ENCODE measurements at regions of chrX and their contacts with region 1.

Region 1: GRCh38 chrX:49754233-49754857 is 58.6 kb upstream of the PAGE1 start:
- DNase-seq: peak; percentile 15 to 69 (median 36)
- ATAC-seq: peak; percentile 88
- H3K4me3 ChIP-seq: no peak overlapping the region
- H3K4me3 Mint-ChIP-seq: no peak overlapping the region
- H3K27ac ChIP-seq: no peak overlapping the region
- H3K27ac Mint-ChIP-seq: no peak overlapping the region
- H3K4me1 ChIP-seq: no peaks in the 10 kb centered on the region
- H3K4me1 Mint-ChIP-seq: peaks cover 4% of the 10 kb centered on the region
- H3K27me3 ChIP-seq: peaks cover 0 to 3% of the 10 kb centered on the region in 2 experiments
- H3K27me3 Mint-ChIP-seq: peaks cover 19% of the 10 kb centered on the region
- CTCF ChIP-seq: peak; percentile 57

Region 2: GRCh38 chrX:48996969-48997368 is 757.4 kb before region 1 on chrX:
- CTCF ChIA-PET with region 1: no interaction called
- POLR2A ChIA-PET with region 1: no interaction called
- intact Hi-C with region 1: loop called in 1 of 2 experiments (anchors 10 kb)
- DNase-seq: peak in 3 of 14 experiments; percentile 10 to 28 (median 24)
- ATAC-seq: no peak
- H3K4me3 ChIP-seq: no peak overlapping the region
- H3K4me3 Mint-ChIP-seq: no peak overlapping the region
- H3K27ac ChIP-seq: no peak overlapping the region
- H3K27ac Mint-ChIP-seq: no peak overlapping the region
- H3K4me1 ChIP-seq: peaks cover 24% of the 10 kb centered on the region
- H3K4me1 Mint-ChIP-seq: peaks cover 20% of the 10 kb centered on the region
- H3K27me3 ChIP-seq: no peaks in the 10 kb centered on the region
- H3K27me3 Mint-ChIP-seq: no peaks in the 10 kb centered on the region
- CTCF ChIP-seq: no peak

Region 3: GRCh38 chrX:49291615-49292337 is 462.6 kb before region 1 on chrX:
- CTCF ChIA-PET with region 1: no interaction called
- POLR2A ChIA-PET with region 1: no interaction called
- intact Hi-C with region 1: loop called in 1 of 2 experiments (anchors 5 kb)
- DNase-seq: peak; percentile 48 to 81 (median 61)
- ATAC-seq: peak; percentile 98
- H3K4me3 ChIP-seq: no peak overlapping the region
- H3K4me3 Mint-ChIP-seq: no peak overlapping the region
- H3K27ac ChIP-seq: no peak overlapping the region
- H3K27ac Mint-ChIP-seq: peak overlapping the region; percentile 38
- H3K4me1 ChIP-seq: peaks cover 35% of the 10 kb centered on the region
- H3K4me1 Mint-ChIP-seq: peaks cover 28% of the 10 kb centered on the region
- H3K27me3 ChIP-seq: no peaks in the 10 kb centered on the region
- H3K27me3 Mint-ChIP-seq: no peaks in the 10 kb centered on the region
- CTCF ChIP-seq: peak; percentile 42

Measured in CD4-positive, alpha-beta T cell (primary cell).